Naive thymus-derived CD4-positive, alpha-beta T cell (primary cell): ENCODE measurements at regions of chr5 and their contacts with region 1.

Region 1: DNA sequence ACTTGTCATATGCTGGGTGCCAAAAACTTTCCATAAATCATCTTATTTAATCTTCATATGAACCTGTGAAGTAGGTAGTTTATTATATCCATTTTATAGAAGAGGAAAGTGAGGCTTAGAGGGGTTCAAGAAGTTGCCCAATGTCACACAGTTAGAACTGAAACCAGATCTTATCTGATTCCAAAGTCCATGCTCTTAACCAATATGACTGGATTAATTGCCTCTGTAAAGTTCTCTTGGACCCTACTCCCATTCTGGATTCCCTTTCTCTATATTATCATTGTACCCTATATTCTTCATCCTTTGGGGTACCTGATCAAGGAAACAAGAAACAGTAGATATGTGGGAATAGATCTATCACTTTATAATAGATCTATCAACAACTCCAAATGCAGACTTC is 64.5 kb upstream of the GCNT4 start:
- DNase-seq: no peak
- ATAC-seq: no peak
- H3K4me3 ChIP-seq: no peak overlapping the region
- H3K4me3 Mint-ChIP-seq: no peak overlapping the region
- H3K27ac ChIP-seq: no peak overlapping the region
- H3K27ac Mint-ChIP-seq: no peak overlapping the region
- H3K4me1 ChIP-seq: peaks cover 0 to under 1% of the 10 kb centered on the region in 2 donors
- H3K4me1 Mint-ChIP-seq: peaks cover 0 to 10% (median 4%) of the 10 kb centered on the region in 7 donors
- H3K27me3 ChIP-seq: no peaks in the 10 kb centered on the region
- H3K27me3 Mint-ChIP-seq: no peaks in the 10 kb centered on the region

Region 2: DNA sequence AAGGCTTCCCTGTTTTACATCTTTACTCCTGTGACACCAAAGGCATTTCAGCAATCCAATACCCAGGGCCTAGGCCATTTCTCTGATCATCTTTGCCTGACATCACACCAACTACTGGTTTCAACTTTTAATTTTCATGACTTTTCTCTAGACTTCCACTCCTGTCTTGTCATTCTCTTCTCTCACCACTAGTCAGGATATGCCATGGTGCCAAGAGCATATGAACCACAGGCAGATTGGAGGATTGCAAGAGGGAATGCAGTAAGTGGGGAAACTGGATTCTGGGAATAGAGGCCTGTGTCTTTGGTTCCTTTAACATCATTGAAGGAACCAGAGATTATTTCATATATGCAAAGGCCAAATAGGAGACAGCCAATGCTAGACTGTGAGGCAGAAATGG is 50.5 kb after region 1 on chr5:
- CTCF ChIA-PET with region 1: no interaction called
- POLR2A ChIA-PET with region 1: no interaction called
- intact Hi-C with region 1: loop called in 1 of 2 experiments (anchors 5 kb)
- DNase-seq: peak in 1 of 9 donors; percentile 12
- ATAC-seq: no peak
- H3K4me3 ChIP-seq: no peak overlapping the region
- H3K4me3 Mint-ChIP-seq: no peak overlapping the region
- H3K27ac ChIP-seq: no peak overlapping the region
- H3K27ac Mint-ChIP-seq: no peak overlapping the region
- H3K4me1 ChIP-seq: no peaks in the 10 kb centered on the region
- H3K4me1 Mint-ChIP-seq: no peaks in the 10 kb centered on the region
- H3K27me3 ChIP-seq: no peaks in the 10 kb centered on the region
- H3K27me3 Mint-ChIP-seq: no peaks in the 10 kb centered on the region

Region 3: GRCh38 chr5:75185763-75186162 is 68.9 kb after region 1 on chr5:
- CTCF ChIA-PET with region 1: no interaction called
- POLR2A ChIA-PET with region 1: no interaction called
- intact Hi-C with region 1: loop called in 1 of 2 experiments (anchors 5 kb)
- DNase-seq: no peak
- ATAC-seq: no peak
- H3K4me3 ChIP-seq: no peak overlapping the region
- H3K4me3 Mint-ChIP-seq: no peak overlapping the region
- H3K27ac ChIP-seq: no peak overlapping the region
- H3K27ac Mint-ChIP-seq: no peak overlapping the region
- H3K4me1 ChIP-seq: no peaks in the 10 kb centered on the region
- H3K4me1 Mint-ChIP-seq: peaks cover 0 to 9% (median 6%) of the 10 kb centered on the region in 7 donors
- H3K27me3 ChIP-seq: no peaks in the 10 kb centered on the region
- H3K27me3 Mint-ChIP-seq: no peaks in the 10 kb centered on the region

Region 4: DNA sequence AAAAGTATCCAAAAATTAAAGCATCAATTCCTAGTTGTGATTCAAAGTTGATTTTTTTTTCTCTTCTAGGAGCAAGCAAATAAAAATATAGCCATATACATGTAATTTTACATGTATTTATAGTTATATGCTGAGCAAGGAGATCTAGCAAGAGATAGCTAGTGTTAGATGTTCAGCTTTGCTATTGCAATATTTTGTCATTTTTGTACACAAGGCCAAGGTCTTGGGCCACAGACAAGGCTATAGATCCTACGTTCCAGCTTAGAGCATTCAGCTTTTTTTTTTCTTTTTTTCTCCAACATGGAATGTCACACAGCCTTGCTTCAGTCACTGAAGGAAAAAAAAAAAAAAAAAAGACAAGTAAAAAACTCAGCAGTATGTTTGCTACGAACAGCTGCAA is 257.0 kb after region 1 on chr5:
- CTCF ChIA-PET with region 1: no interaction called
- POLR2A ChIA-PET with region 1: no interaction called
- intact Hi-C with region 1: no loop called
- DNase-seq: no peak
- ATAC-seq: no peak
- H3K4me3 ChIP-seq: no peak overlapping the region
- H3K4me3 Mint-ChIP-seq: no peak overlapping the region
- H3K27ac ChIP-seq: no peak overlapping the region
- H3K27ac Mint-ChIP-seq: no peak overlapping the region
- H3K4me1 ChIP-seq: no peaks in the 10 kb centered on the region
- H3K4me1 Mint-ChIP-seq: no peaks in the 10 kb centered on the region
- H3K27me3 ChIP-seq: no peaks in the 10 kb centered on the region
- H3K27me3 Mint-ChIP-seq: no peaks in the 10 kb centered on the region

Region 5: DNA sequence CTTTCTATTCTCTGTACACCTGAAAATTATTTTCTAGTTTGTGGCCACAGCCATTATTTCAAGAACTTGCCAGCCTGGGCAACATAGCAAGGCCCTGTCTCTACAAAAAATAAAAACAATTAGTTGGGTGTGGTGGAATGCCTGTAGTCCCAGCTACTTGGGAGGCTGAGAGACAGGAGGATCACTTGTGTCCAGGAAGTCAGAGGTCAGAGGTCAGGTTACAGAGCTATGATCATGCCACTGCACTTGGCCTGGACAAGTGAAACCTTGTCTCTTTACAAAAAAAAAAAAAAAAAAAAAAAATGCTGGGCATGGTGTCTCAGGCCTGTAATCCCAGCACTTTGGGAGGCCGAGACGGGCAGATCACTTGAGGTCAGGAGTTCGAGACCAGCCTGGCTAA is 278.4 kb after region 1 on chr5:
- CTCF ChIA-PET with region 1: no interaction called
- POLR2A ChIA-PET with region 1: no interaction called
- intact Hi-C with region 1: no loop called
- DNase-seq: no peak
- ATAC-seq: no peak
- H3K4me3 ChIP-seq: no peak overlapping the region
- H3K4me3 Mint-ChIP-seq: no peak overlapping the region
- H3K27ac ChIP-seq: no peak overlapping the region
- H3K27ac Mint-ChIP-seq: no peak overlapping the region
- H3K4me1 ChIP-seq: no peaks in the 10 kb centered on the region
- H3K4me1 Mint-ChIP-seq: no peaks in the 10 kb centered on the region
- H3K27me3 ChIP-seq: no peaks in the 10 kb centered on the region
- H3K27me3 Mint-ChIP-seq: no peaks in the 10 kb centered on the region

Region 6: GRCh38 chr5:75457685-75458084 is 340.8 kb after region 1 on chr5:
- CTCF ChIA-PET with region 1: no interaction called
- POLR2A ChIA-PET with region 1: no interaction called
- intact Hi-C with region 1: no loop called
- DNase-seq: no peak
- ATAC-seq: no peak
- H3K4me3 ChIP-seq: no peak overlapping the region
- H3K4me3 Mint-ChIP-seq: no peak overlapping the region
- H3K27ac ChIP-seq: no peak overlapping the region
- H3K27ac Mint-ChIP-seq: no peak overlapping the region
- H3K4me1 ChIP-seq: no peaks in the 10 kb centered on the region
- H3K4me1 Mint-ChIP-seq: peaks cover 9 to 30% (median 22%) of the 10 kb centered on the region in 7 donors
- H3K27me3 ChIP-seq: no peaks in the 10 kb centered on the region
- H3K27me3 Mint-ChIP-seq: no peaks in the 10 kb centered on the region